AG04450 (cell line): ENCODE measurements at regions of chr22 and their contacts with region 1.

Region 1: DNA sequence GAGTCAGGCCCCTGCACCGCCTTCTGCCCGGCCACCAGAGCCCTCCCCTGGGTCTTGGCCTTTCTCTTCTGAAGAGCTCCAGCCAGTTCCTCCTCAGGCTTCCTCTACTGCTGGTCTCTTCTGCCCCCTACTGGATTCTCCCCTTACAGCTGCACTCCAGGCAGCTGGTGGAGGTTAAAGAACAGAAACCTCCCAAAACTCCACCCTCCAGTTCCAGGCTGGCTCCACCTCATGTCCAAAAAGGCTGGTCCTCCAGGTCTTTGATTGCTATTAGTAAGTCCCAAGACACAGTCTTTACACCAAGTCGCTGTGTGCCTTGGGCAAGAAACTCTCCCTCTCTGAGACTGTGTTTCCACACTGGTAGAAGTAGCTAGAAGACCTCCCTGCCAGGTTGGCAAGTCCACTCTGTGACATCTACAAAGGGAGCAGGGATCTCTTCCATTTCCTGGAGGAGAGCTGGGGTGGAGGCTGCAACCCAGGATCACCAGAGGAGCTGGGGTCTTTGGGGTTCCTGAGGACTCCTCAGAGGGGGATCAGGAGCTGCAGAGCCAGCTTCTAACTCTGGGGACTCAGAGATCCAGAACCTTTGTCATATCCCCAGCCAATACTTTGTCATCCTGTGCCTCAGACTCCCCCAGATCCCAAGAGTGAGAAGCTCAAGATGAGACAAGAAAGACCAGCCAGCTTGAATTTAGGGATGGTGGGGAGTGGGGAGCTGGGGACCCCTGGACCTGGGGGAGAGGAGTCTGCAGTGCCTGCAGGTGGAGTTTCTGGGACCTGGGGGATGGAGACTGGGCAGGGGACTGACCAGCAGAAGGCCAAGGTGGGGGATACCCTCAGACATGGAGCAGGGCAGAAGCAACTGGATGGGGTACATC is 3.4 kb upstream of the IGLL5 start:
- DNase-seq: no peak
- H3K4me3 ChIP-seq: no peak overlapping the region
- H3K27ac ChIP-seq: no peak overlapping the region
- H3K27me3 ChIP-seq: peaks cover 4% of the 10 kb centered on the region
- CTCF ChIP-seq: peak; percentile 59

Region 2: GRCh38 chr22:22591348-22592299 is 292.6 kb before region 1 on chr22:
- CTCF ChIA-PET with region 1: interaction called, 22 read pairs
- POLR2A ChIA-PET with region 1: no interaction called
- DNase-seq: no peak
- H3K4me3 ChIP-seq: no peak overlapping the region
- H3K27ac ChIP-seq: no peak overlapping the region
- H3K27me3 ChIP-seq: peaks cover 5% of the 10 kb centered on the region
- CTCF ChIP-seq: no peak

Region 3: DNA sequence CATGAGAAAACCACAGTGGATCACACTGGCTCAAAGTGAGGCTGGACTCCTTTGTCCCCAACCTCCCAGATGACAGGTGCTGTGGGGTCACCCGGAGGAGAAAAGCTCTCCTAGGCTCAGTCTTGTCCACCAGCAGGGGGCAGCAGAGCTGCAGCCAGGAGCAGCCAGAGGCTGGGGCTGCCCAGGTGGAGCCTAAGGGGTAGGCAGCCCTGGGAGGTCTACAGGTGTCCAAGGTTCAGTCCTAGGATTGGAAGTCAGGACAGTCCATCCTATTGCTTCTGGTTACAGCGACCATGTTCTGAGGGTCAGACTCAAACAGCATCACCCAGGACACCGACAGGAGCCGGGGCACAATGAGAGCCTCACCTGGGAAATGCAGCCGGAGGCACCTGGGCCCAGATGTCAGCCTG is 74.2 kb before region 1 on chr22:
- CTCF ChIA-PET with region 1: interaction called, 22 read pairs
- POLR2A ChIA-PET with region 1: no interaction called
- DNase-seq: no peak
- H3K4me3 ChIP-seq: no peak overlapping the region
- H3K27ac ChIP-seq: no peak overlapping the region
- H3K27me3 ChIP-seq: peaks cover 2% of the 10 kb centered on the region
- CTCF ChIP-seq: peak; percentile 76

Region 4: GRCh38 chr22:22866381-22867111 is 17.7 kb before region 1 on chr22:
- CTCF ChIA-PET with region 1: no interaction called
- POLR2A ChIA-PET with region 1: no interaction called
- DNase-seq: no peak
- H3K4me3 ChIP-seq: no peak overlapping the region
- H3K27ac ChIP-seq: no peak overlapping the region
- H3K27me3 ChIP-seq: peaks cover 2% of the 10 kb centered on the region
- CTCF ChIP-seq: no peak

Region 5: GRCh38 chr22:22903355-22903777 is 19.1 kb after region 1 on chr22:
- CTCF ChIA-PET with region 1: no interaction called
- POLR2A ChIA-PET with region 1: no interaction called
- DNase-seq: no peak
- H3K4me3 ChIP-seq: no peak overlapping the region
- H3K27ac ChIP-seq: no peak overlapping the region
- H3K27me3 ChIP-seq: peaks cover 7% of the 10 kb centered on the region
- CTCF ChIP-seq: no peak